ENCODE measurements at regions of chr14 and their contacts with region 1.

Region 1: DNA sequence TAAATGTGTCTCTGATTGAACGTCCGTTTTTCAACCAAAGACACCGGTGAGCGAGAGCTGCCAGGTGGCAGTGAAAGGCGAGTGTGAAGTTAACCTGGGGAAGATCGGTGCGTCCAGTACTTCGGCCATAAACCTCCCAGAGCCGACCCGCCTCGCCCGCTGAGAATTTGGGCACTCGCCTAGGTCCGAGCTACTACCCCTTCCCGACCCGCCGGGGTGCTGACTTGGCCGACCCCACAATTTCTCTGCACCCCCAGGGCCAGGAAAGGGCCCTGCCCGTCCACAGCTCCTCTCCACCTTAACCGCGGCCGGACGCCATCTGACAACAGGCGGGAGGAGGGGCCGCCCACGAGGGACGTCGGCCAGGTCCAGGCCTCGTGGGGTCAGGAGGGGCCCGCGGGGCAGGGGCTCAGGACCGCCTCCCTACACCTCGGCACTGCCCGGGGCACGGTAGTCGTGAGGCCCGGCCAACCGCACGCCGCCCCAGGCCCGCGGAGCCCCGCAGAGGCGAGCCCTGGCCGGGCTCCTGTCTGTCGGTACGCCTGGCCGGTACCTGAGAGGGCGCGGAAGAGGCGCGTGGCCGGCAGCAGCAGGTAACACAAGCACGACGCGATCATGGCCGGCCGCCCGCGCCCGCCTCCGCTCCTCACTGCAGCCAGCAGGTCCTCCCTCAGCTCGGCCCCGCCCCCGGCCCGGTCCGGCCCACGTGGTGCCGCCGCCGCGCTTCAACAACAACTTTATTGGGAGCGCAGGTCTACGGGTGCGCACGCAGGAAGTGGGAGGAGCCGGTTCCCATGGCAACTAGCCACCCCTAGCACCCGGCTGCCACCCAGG is at the start of gene ANGEL1:
- DNase-seq: peak; percentile 97
- ATAC-seq: peak; percentile 96
- H3K4me3 Mint-ChIP-seq: peak within 1 kb of the TSS; percentile 85
- H3K27ac Mint-ChIP-seq: peak within 1 kb of the TSS; percentile 69
- H3K4me1 Mint-ChIP-seq: peaks cover 20% of the 10 kb centered on the region
- H3K27me3 Mint-ChIP-seq: no peaks in the 10 kb centered on the region
- total RNA-seq, gene ANGEL1: 12.9 to 14.6 TPM

Region 2: GRCh38 chr14:76784266-76785264 is 27.9 kb before region 1 on chr14:
- CTCF ChIA-PET with region 1: interaction called, 39 read pairs
- DNase-seq: peak; percentile 73
- ATAC-seq: peak; percentile 84
- H3K4me3 Mint-ChIP-seq: no peak overlapping the region
- H3K27ac Mint-ChIP-seq: no peak overlapping the region
- H3K4me1 Mint-ChIP-seq: peaks cover 42% of the 10 kb centered on the region
- H3K27me3 Mint-ChIP-seq: no peaks in the 10 kb centered on the region

Region 3: DNA sequence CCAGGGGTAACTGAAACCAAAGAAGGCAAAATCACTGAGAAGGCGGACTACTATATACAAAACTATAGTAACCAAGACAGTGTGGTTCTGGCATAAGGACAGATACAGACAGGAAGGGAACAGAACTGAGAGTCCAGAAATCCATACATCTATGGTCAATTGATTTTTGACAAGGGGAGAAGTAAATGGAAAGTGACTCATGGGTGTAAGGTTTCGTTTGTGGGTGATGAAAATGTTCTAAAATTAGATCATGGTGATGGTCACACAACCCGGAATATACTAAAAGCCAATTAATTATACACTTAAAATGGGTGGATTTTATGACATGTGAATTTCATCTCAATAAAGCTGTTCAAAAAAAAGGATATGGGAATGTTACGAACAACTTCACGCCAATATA is 18.5 kb before region 1 on chr14:
- CTCF ChIA-PET with region 1: interaction called, 10 read pairs
- DNase-seq: no peak
- ATAC-seq: no peak
- H3K4me3 Mint-ChIP-seq: no peak overlapping the region
- H3K27ac Mint-ChIP-seq: no peak overlapping the region
- H3K4me1 Mint-ChIP-seq: no peaks in the 10 kb centered on the region
- H3K27me3 Mint-ChIP-seq: no peaks in the 10 kb centered on the region

Measured in activated CD8-positive, alpha-beta memory T cell treated with anti-CD3 and anti-CD28 coated beads, Interleukin-2, amount 10 ng/mL, durations not matched to agents 7 days and 5 days (primary cell).